A549 (cell line): ENCODE measurements at regions of chr17 and their contacts with region 1.

Region 1: GRCh38 chr17:31558748-31559644 is 167.5 kb downstream of the RAB11FIP4 start:
- DNase-seq: peak; percentile 82 to 91
- ATAC-seq: peak; percentile 85 to 86
- H3K4me3 ChIP-seq: peak overlapping the region; percentile 81
- H3K27ac ChIP-seq: peak overlapping the region; percentile 97 to 98
- H3K4me1 ChIP-seq: peaks cover 31% of the 10 kb centered on the region
- CTCF ChIP-seq: peak; percentile 99
- EP300 ChIP-seq: no peak
- POLR2A ChIP-seq: peak; percentile 67
- RAD21 ChIP-seq: peak; percentile 71 to 96

Region 2: GRCh38 chr17:31508288-31509094 is 50.5 kb before region 1 on chr17:
- CTCF ChIA-PET with region 1: no interaction called
- POLR2A ChIA-PET with region 1: no interaction called
- DNase-seq: peak; percentile 31 to 41
- ATAC-seq: peak; percentile 56 to 82; a peak in 4 of 6 replicates
- H3K4me3 ChIP-seq: no peak overlapping the region
- H3K27ac ChIP-seq: no peak overlapping the region
- H3K4me1 ChIP-seq: no peaks in the 10 kb centered on the region
- CTCF ChIP-seq: no peak
- EP300 ChIP-seq: no peak
- POLR2A ChIP-seq: no peak
- RAD21 ChIP-seq: no peak

Region 3: DNA sequence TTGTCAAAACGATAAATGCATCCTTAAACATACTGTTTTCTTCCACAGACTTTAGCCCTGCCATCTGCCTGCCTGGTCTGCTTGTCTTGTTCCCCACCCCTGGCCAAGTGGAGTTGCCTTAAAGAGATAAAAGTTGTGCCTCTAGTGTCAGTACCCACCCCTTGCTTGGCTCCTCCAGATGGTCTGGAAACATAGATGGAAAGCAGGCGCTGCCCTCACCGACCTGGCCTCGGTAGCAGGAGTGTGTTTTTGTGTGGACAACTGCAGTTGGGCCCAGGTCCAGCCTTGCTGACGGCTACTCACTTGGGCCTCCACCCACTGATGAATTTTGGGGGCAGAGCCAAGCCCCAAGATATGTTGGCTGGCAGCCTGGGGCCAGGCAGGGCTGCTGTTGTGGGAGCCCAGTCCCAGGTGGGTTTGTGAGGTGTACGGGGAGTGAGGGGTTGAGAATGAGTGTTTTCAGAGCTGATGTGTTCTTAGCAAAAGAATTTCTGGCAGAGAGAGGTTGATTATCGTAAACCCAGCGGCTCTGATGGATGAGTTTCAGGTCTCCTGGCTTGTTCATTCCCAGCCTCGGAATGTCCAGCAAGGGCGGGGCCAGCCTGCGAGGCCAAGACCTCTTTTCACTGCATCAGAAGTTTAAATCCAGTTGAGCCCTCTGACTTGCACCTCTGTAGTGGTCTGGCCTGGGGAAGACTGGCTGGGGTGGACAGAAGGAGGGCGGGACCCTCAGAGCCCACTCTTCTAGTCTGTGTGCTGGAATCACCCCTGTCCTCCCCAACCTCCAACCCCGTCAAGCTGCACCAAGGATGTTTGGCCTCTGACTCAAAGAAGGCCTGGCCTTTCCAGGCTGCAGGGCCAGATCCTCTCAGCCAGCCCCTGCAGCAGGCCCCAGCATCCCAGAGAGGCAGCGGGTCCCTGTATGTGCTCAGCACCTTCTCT is 12.2 kb after region 1 on chr17:
- CTCF ChIA-PET with region 1: interaction called, 30 read pairs
- POLR2A ChIA-PET with region 1: no interaction called
- DNase-seq: peak in 1 of 2 experiments; percentile 24
- ATAC-seq: peak; percentile 11 to 74; a peak in 3 of 6 replicates
- H3K4me3 ChIP-seq: no peak overlapping the region
- H3K27ac ChIP-seq: peak overlapping the region in 1 of 2 experiments; percentile 51; a peak in 2 of 6 replicates
- H3K4me1 ChIP-seq: peaks cover 11% of the 10 kb centered on the region
- CTCF ChIP-seq: no peak
- EP300 ChIP-seq: no peak
- POLR2A ChIP-seq: no peak
- RAD21 ChIP-seq: no peak

Region 4: GRCh38 chr17:31586946-31587345 is 27.9 kb after region 1 on chr17:
- CTCF ChIA-PET with region 1: interaction called, 12 read pairs
- POLR2A ChIA-PET with region 1: interaction called, 3 read pairs
- DNase-seq: no peak
- ATAC-seq: no peak
- H3K4me3 ChIP-seq: no peak overlapping the region
- H3K27ac ChIP-seq: no peak overlapping the region
- H3K4me1 ChIP-seq: no peaks in the 10 kb centered on the region
- CTCF ChIP-seq: no peak
- EP300 ChIP-seq: no peak
- POLR2A ChIP-seq: no peak
- RAD21 ChIP-seq: no peak

Region 5: GRCh38 chr17:31820691-31821435 is 261.9 kb after region 1 on chr17:
- CTCF ChIA-PET with region 1: interaction called, 12 read pairs
- POLR2A ChIA-PET with region 1: no interaction called
- DNase-seq: no peak
- ATAC-seq: no peak
- H3K4me3 ChIP-seq: no peak overlapping the region
- H3K27ac ChIP-seq: no peak overlapping the region
- H3K4me1 ChIP-seq: no peaks in the 10 kb centered on the region
- CTCF ChIP-seq: no peak
- EP300 ChIP-seq: no peak
- POLR2A ChIP-seq: no peak
- RAD21 ChIP-seq: no peak

Region 6: DNA sequence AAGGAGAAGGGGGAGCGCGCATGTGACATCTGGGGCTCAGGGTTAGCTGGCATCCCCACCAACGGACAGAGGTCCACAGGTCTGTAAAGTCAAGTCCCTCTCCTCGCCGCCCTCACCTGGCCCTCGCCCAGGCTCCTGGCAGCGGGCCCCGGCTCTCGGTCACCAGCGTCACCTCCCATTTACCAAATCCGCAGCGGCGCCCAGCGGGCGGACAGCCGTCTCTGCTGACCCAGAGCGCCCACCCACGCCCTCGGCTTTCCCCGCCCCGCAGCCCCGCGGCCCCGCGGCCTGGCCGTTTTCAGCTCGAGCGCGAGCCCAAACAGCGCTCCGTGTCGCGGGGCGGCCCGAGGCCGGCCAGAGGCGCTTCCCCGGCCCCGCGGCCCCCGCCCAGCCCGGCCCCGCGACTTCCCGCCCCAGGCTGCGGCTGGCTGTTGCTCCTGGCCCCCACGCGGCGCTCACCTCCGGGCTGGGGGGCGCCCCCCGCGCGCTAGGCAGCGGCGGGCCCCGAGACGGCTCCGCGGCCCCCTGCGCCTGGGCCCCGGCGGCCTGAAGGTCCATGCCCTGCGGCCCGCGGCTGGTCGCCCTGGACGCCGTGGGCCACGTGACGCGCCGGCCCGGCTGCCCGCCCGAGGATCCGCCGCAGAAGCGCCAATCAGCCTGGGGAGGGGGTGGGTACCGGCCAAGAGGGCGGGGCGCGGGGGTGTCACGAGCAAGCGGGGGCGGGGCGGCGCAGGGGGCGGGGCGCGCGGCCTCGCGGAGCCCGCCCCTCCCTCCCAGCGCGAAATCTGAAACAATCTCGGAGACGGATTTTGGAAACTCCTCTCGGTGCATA is 299.9 kb after region 1 on chr17 and contains the start of gene COPRS:
- CTCF ChIA-PET with region 1: interaction called, 12 read pairs
- POLR2A ChIA-PET with region 1: no interaction called
- DNase-seq: peak; percentile 81 to 87
- ATAC-seq: peak; percentile 82 to 91
- H3K4me3 ChIP-seq: peak within 1 kb of the TSS; percentile 95
- H3K27ac ChIP-seq: peak within 1 kb of the TSS; percentile 96 to 98
- H3K4me1 ChIP-seq: peaks cover 14% of the 10 kb centered on the region
- CTCF ChIP-seq: peak; percentile 26; the same call in 2 of the 3 replicates
- EP300 ChIP-seq: no peak
- POLR2A ChIP-seq: peak; percentile 88
- RAD21 ChIP-seq: 0 out of 5 replicates have a peak, but pooled peaks of 1 of the 2 experiments have one; percentile 24
- polyA plus RNA-seq, gene COPRS: 72.7 and 80.5 TPM in 2 replicates